Ascending aorta (tissue), 2 donors: ENCODE measurements at regions of chr14 and their contacts with region 1.

Region 1: GRCh38 chr14:65156568-65157366 is 54.5 kb upstream of the MAX start:
- DNase-seq: peak in 1 of 2 donors; percentile 75
- H3K4me3 ChIP-seq: peak overlapping the region; percentile 47 to 50
- H3K27ac ChIP-seq: peak overlapping the region; percentile 83 to 88
- H3K4me1 ChIP-seq: peaks cover 0 to 11% of the 10 kb centered on the region in 2 donors
- H3K27me3 ChIP-seq: no peaks in the 10 kb centered on the region
- CTCF ChIP-seq: no peak

Region 2: GRCh38 chr14:65102441-65103149 is 54.2 kb before region 1 on chr14 and contains the start of gene MAX:
- intact Hi-C with region 1: loop called (anchors 2 kb)
- DNase-seq: peak; percentile 97 to 99
- H3K4me3 ChIP-seq: peak within 1 kb of the TSS; percentile 89 to 93
- H3K27ac ChIP-seq: peak within 1 kb of the TSS; percentile 81 to 88
- H3K4me1 ChIP-seq: peaks cover 6 to 32% of the 10 kb centered on the region in 2 donors
- H3K27me3 ChIP-seq: no peaks in the 10 kb centered on the region
- CTCF ChIP-seq: no peak
- total RNA-seq, gene MAX: 26.8 TPM